ENCODE measurements at regions of chr15 and their contacts with region 1.

Region 1: DNA sequence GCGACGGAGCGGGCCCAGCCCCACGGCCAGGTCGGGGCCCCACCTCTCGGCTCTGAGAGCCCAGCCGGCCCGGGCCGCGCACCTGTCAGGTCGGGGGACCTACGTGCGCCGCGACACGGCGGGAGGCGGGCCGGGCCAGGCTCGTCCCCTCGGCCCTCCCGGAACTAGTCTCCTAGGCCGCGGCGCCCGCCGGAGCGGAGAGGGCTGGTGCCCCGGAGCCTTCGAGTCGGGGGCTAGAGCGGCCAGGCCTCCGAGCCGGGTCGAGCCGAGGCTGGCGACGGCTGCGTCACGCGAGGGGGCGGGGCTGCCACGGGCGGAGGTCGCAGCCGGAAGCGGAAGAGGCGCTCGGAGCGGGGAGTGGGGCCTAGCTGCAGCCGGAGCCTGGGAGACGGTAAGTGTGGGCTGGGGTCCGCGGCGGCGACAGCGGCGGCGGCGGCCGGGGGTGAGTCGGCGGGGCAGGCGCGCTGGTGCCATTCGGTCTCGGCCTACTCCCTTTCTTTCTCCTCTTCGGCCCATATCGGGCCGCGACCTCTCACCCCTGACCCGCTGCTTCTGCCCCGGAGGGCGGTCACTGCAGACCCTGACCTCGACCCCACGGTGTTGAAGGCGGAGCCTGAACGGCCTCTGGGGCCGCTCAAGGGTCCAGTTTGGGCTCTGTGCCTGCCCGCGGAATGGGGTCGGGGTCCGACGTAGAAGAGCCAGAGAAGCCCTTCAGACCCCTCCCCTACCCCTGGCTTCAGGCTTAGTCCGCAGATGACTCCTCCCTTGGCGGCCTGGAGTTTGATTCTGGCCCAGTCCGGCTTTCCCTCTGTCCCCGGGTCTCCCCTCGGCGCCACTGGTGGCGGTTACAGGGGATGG is at the start of gene CLK3:
- DNase-seq: peak; percentile 97
- H3K4me3 ChIP-seq: peak within 1 kb of the TSS; percentile 96
- H3K27ac ChIP-seq: peak within 1 kb of the TSS; percentile 81
- H3K4me1 ChIP-seq: peaks cover 17% of the 10 kb centered on the region
- CTCF ChIP-seq: no peak
- total RNA-seq, gene CLK3: 85.1 and 86.5 TPM in 2 replicates

Region 2: DNA sequence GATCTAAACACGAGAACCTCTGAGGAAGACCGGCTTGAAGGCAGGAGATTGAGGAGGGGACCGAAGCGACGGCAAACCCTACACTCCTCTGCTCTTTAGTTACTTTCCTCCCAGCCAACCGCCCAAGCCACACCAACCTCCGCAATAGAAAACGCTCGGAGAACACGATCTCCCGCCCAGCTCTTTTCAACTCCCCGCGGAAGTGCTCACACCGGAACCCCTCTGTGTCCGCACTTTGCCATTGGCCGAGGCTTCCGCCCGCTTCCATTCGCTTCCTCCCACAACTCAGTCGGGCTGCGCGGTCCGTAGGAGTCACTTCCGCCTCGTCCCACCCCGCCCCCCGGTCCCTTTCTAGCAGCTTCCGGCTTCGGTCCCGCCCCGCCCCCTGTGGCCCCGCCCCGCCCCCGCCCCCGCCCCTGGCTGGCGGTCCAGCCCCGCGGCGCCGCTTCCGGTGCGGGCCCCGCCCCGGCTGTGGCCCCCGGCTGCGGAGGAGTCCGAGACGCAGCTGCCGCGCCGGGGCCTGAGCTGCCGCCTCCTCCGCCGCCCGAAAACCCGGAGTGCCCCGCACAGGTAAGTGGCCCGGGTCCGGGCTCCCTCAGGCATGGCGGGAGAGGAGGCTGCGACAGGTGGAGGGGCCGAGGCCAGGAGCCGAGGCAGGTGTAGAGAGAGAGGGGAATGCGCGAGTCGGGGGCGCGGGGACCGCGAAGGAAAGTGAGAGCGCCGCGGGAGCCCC is 74.8 kb before region 1 on chr15 and contains the start of gene ARID3B:
- CTCF ChIA-PET with region 1: interaction called, 3 read pairs
- POLR2A ChIA-PET with region 1: interaction called, 8 read pairs
- intact Hi-C with region 1: loop called (anchors 2 kb)
- DNase-seq: peak; percentile 98
- H3K4me3 ChIP-seq: peak within 1 kb of the TSS; percentile 91
- H3K27ac ChIP-seq: peak within 1 kb of the TSS; percentile 36
- H3K4me1 ChIP-seq: peaks cover 20% of the 10 kb centered on the region
- CTCF ChIP-seq: no peak
- total RNA-seq, gene ARID3B: 0.80 and 7.5 TPM in 2 replicates

Region 3: DNA sequence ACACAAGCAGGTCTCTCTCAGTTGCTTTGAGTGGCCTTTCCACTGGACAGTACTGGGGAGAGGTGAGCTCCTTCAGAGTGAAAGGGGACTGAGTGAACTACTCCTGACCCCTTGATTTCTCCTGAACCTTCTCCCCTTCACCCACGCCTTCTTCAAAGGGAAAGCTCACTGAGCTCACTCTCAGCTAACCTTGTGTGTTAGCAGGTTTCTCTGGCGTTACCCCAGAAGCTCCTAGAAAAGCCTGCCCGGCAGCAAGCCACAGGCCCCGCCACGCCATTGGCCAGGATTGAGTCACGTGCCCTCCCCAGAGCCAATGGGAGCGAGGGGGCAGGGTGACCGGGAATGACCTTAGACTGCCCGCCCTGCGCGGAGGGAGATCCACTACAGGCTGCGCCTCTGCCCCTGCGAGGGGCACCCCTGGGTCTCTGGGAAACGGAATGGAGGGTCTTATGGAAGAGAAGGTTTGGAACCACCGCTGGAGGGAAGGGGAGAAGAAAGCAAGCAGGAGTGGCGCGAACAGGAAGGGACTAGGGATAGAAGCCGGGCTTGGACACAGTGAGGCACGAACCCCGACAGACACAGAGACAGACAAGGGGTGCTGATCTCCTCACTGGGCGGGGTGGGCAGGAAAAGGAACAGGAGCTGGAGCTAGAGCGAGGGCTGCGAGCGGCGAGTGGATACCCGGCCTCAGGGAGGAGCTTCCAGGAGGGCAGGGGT is 17.5 kb before region 1 on chr15:
- CTCF ChIA-PET with region 1: interaction called, 4 read pairs
- POLR2A ChIA-PET with region 1: interaction called, 10 read pairs
- intact Hi-C with region 1: no loop called
- DNase-seq: peak; percentile 89
- H3K4me3 ChIP-seq: peak overlapping the region; percentile 66
- H3K27ac ChIP-seq: peak overlapping the region; percentile 32
- H3K4me1 ChIP-seq: peaks cover 12% of the 10 kb centered on the region
- CTCF ChIP-seq: no peak